Activated CD8-positive, alpha-beta T cell treated with anti-CD3 and anti-CD28 coated beads for 36 hours (primary cell): ENCODE measurements at regions of chrX and their contacts with region 1.

Region 1: GRCh38 chrX:24081661-24082264 is 27.0 kb downstream of the EIF2S3 start:
- DNase-seq: peak; percentile 68
- ATAC-seq: peak; percentile 73
- H3K4me3 Mint-ChIP-seq: peak overlapping the region; percentile 45
- H3K27ac Mint-ChIP-seq: no peak overlapping the region
- H3K4me1 Mint-ChIP-seq: peaks cover 18% of the 10 kb centered on the region
- H3K27me3 Mint-ChIP-seq: no peaks in the 10 kb centered on the region
- CTCF ChIP-seq: peak; percentile 50

Region 2: GRCh38 chrX:24150051-24150790 is 68.5 kb after region 1 on chrX:
- CTCF ChIA-PET with region 1: no interaction called
- POLR2A ChIA-PET with region 1: no interaction called
- intact Hi-C with region 1: loop called (anchors 5 kb)
- DNase-seq: peak; percentile 85
- ATAC-seq: peak; percentile 81
- H3K4me3 Mint-ChIP-seq: peak overlapping the region; percentile 93
- H3K27ac Mint-ChIP-seq: peak overlapping the region; percentile 91
- H3K4me1 Mint-ChIP-seq: peaks cover 49% of the 10 kb centered on the region
- H3K27me3 Mint-ChIP-seq: no peaks in the 10 kb centered on the region
- CTCF ChIP-seq: peak; percentile 37

Region 3: GRCh38 chrX:24241822-24242648 is 160.3 kb after region 1 on chrX:
- CTCF ChIA-PET with region 1: interaction called, 4 read pairs
- POLR2A ChIA-PET with region 1: no interaction called
- intact Hi-C with region 1: loop called (anchors 5 kb)
- DNase-seq: peak; percentile 5
- ATAC-seq: peak; percentile 62
- H3K4me3 Mint-ChIP-seq: no peak overlapping the region
- H3K27ac Mint-ChIP-seq: no peak overlapping the region
- H3K4me1 Mint-ChIP-seq: peaks cover 10% of the 10 kb centered on the region
- H3K27me3 Mint-ChIP-seq: no peaks in the 10 kb centered on the region
- CTCF ChIP-seq: peak; percentile 42